GM10248 (cell line): ENCODE measurements at regions of chr14 and their contacts with region 1.

Region 1: DNA sequence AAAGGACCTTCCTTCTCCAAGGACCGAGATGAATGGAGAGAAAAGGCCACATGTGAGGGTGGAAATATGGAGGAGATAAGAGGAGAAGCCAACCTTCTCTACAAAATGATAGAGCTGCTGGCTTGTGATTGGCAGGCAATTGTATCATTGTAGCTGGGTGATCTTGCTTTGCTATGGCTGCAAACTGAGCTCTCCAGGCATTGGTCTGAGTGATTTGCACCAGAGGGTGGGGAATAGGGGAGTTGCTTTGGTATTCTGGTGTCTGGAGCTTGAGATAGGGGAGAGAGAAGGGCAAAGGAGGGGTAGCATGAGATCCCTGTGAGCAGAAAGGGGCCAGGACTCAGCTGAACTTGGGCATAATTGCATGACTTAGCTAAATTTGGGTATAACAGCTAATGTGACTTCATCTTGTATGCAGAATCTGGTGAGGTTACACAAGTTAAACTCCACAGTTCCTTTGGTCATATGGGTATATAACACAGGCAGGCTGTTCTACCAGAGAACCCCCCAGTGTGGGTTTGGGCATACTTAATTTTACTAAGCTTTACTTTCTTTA is 72.0 kb downstream of the FOS start:
- DNase-seq: no peak
- CTCF ChIP-seq: no peak

Region 2: GRCh38 chr14:75363570-75364227 is 13.1 kb after region 1 on chr14:
- CTCF ChIA-PET with region 1: interaction called, 10 read pairs
- POLR2A ChIA-PET with region 1: no interaction called
- DNase-seq: no peak
- CTCF ChIP-seq: no peak

Region 3: GRCh38 chr14:76820700-76821099 is 1470.1 kb after region 1 on chr14:
- CTCF ChIA-PET with region 1: no interaction called
- POLR2A ChIA-PET with region 1: interaction called, 13 read pairs
- DNase-seq: no peak
- CTCF ChIP-seq: no peak